ENCODE measurements at regions of chr12 and their contacts with region 1.

Region 1: GRCh38 chr12:24948757-24949722 is at the start of gene BCAT1:
- DNase-seq: peak in 9 of 10 donors; percentile 40 to 71 (median 58)
- H3K4me3 ChIP-seq: peak within 1 kb of the TSS; percentile 39 to 86 (median 61)
- H3K27ac ChIP-seq: peak within 1 kb of the TSS in 2 of 59 donors; percentile 4 to 6
- H3K27me3 ChIP-seq: peaks cover 0 to 26% (median 3%) of the 10 kb centered on the region in 45 donors
- CTCF ChIP-seq: peak in 18 of 56 donors; percentile 2 to 50 (median 15)
- total RNA-seq, gene BCAT1: 11.5 to 48.1 (median 32.6) TPM

Region 2: GRCh38 chr12:24630446-24630845 is 318.6 kb before region 1 on chr12:
- intact Hi-C with region 1: no loop called
- DNase-seq: no peak
- H3K4me3 ChIP-seq: no peak overlapping the region
- H3K27ac ChIP-seq: no peak overlapping the region
- H3K27me3 ChIP-seq: peaks cover 0 to 6% (median 0%) of the 10 kb centered on the region in 45 donors
- CTCF ChIP-seq: no peak

Region 3: GRCh38 chr12:24852420-24852819 is 96.6 kb before region 1 on chr12:
- intact Hi-C with region 1: loop called in 1 of 2 experiments (anchors 10 kb)
- DNase-seq: no peak
- H3K4me3 ChIP-seq: no peak overlapping the region
- H3K27ac ChIP-seq: no peak overlapping the region
- H3K27me3 ChIP-seq: no peaks in the 10 kb centered on the region
- CTCF ChIP-seq: peak; percentile 15 to 69 (median 48)

Region 4: DNA sequence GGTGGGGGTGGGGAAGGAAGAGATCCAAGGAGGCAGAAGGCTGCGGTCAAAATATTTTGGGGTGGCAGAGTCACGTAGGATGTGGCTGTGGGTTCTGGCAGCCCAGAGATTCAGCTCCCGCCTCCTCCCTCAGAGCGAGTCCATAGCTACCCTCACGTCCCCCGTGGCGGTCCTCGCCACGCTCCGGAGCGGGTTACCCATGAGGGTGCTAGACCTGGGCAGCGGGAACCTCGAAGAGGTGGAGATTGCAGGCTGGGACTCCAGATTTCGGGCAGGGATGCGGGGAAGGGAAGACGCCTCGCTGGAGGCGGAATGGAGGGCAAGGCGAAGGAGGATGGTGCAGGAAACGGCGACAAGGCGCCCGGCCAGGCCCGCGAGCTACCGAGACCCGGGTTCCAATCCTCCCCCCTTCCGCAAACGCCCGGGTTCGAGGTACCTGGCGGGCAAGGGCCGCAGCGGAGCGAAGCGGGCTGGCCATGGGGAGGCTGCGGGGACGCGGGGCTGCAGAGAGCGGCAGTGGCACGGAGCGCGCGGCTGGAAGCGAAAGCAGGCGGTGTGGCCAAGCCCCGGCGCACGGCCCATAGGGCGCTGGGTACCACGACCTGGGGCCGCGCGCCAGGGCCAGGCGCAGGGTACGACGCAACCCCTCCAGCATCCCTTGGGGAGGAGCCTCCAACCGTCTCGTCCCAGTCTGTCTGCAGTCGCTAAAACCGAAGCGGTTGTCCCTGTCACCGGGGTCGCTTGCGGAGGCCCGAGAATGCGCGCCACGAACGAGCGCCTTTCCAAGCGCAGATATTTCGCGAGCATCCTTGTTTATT is 46.3 kb before region 1 on chr12:
- intact Hi-C with region 1: loop called in 1 of 2 experiments (anchors 5 kb)
- DNase-seq: peak in 9 of 10 donors; percentile 4 to 68 (median 42)
- H3K4me3 ChIP-seq: peak overlapping the region; percentile 54 to 91 (median 77)
- H3K27ac ChIP-seq: peak overlapping the region in 58 of 59 donors; percentile 48 to 97 (median 92)
- H3K27me3 ChIP-seq: peaks cover 0 to 4% (median 0%) of the 10 kb centered on the region in 45 donors
- CTCF ChIP-seq: peak in 1 of 56 donors; percentile 13

Region 5: GRCh38 chr12:24931666-24932405 is 17.2 kb before region 1 on chr12:
- intact Hi-C with region 1: no loop called
- DNase-seq: no peak
- H3K4me3 ChIP-seq: no peak overlapping the region
- H3K27ac ChIP-seq: peak overlapping the region in 3 of 59 donors; percentile 14 to 55 (median 34)
- H3K27me3 ChIP-seq: peaks cover 0 to 8% (median 0%) of the 10 kb centered on the region in 45 donors
- CTCF ChIP-seq: no peak

Measured in dorsolateral prefrontal cortex (tissue), 120 donors.